ENCODE measurements at regions of chr1 and their contacts with region 1.

Region 1: GRCh38 chr1:115807723-115808122 is 33.2 kb downstream of the NHLH2 start:
- DNase-seq: peak in 1 of 2 donors; percentile 35
- H3K4me3 ChIP-seq: no peak overlapping the region
- H3K27ac ChIP-seq: no peak overlapping the region
- H3K4me1 ChIP-seq: no peaks in the 10 kb centered on the region
- H3K27me3 ChIP-seq: no peaks in the 10 kb centered on the region
- CTCF ChIP-seq: peak; percentile 53 to 59

Region 2: DNA sequence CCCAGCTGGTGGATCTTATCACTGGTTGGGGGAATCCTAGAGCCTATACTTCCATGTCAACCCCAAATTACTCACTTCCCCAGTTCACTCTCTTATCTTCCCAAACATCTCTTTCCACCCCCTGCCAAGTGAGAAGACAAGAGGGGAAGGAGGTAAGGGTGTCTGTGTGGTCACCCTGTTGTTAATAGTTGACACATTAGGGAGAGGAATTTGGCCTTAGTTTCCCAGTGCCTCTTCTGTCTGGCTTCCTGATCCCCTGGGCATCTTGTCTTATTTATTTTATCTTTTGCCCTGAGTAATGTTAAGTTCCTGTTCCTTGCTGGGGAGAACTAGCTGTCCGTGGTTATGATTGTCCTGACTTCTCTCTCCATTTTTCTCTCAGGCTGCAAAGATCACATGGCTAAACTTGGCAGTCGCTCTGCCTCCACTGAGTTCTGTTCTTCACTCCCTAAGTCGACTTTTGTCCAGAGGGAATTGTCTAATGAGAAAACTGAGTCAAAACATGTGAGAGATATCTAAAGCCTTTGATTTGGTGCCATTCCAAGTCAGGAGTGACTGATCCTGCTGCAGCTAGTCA is 1496.9 kb before region 1 on chr1:
- intact Hi-C with region 1: loop called (anchors 10 kb)
- DNase-seq: no peak
- H3K4me3 ChIP-seq: no peak overlapping the region
- H3K27ac ChIP-seq: peak overlapping the region in 1 of 2 donors; percentile 18
- H3K4me1 ChIP-seq: peaks cover 0 to 26% (median 2%) of the 10 kb centered on the region in 4 donors
- H3K27me3 ChIP-seq: no peaks in the 10 kb centered on the region
- CTCF ChIP-seq: no peak

Region 3: GRCh38 chr1:115829023-115829693 is 21.4 kb after region 1 on chr1:
- intact Hi-C with region 1: no loop called
- DNase-seq: no peak
- H3K4me3 ChIP-seq: peak overlapping the region; percentile 47 to 53
- H3K27ac ChIP-seq: no peak overlapping the region
- H3K4me1 ChIP-seq: peaks cover 0 to 17% (median 10%) of the 10 kb centered on the region in 4 donors
- H3K27me3 ChIP-seq: peaks cover 0 to 13% of the 10 kb centered on the region in 2 donors
- CTCF ChIP-seq: no peak

Region 4: GRCh38 chr1:115980998-115981993 is 173.6 kb after region 1 on chr1:
- intact Hi-C with region 1: loop called (anchors 5 kb)
- DNase-seq: no peak
- H3K4me3 ChIP-seq: no peak overlapping the region
- H3K27ac ChIP-seq: no peak overlapping the region
- H3K4me1 ChIP-seq: peaks cover 0 to 21% (median 5%) of the 10 kb centered on the region in 4 donors
- H3K27me3 ChIP-seq: no peaks in the 10 kb centered on the region
- CTCF ChIP-seq: peak; percentile 52 to 58

Region 5: GRCh38 chr1:116006486-116006964 is 198.8 kb after region 1 on chr1:
- intact Hi-C with region 1: no loop called
- DNase-seq: no peak
- H3K4me3 ChIP-seq: no peak overlapping the region
- H3K27ac ChIP-seq: no peak overlapping the region
- H3K4me1 ChIP-seq: peaks cover 0 to 21% (median 14%) of the 10 kb centered on the region in 4 donors
- H3K27me3 ChIP-seq: no peaks in the 10 kb centered on the region
- CTCF ChIP-seq: no peak

Measured in tibial artery (tissue), 4 donors.